Ascending aorta (tissue), 2 donors: ENCODE measurements at regions of chr7 and their contacts with region 1.

Region 1: DNA sequence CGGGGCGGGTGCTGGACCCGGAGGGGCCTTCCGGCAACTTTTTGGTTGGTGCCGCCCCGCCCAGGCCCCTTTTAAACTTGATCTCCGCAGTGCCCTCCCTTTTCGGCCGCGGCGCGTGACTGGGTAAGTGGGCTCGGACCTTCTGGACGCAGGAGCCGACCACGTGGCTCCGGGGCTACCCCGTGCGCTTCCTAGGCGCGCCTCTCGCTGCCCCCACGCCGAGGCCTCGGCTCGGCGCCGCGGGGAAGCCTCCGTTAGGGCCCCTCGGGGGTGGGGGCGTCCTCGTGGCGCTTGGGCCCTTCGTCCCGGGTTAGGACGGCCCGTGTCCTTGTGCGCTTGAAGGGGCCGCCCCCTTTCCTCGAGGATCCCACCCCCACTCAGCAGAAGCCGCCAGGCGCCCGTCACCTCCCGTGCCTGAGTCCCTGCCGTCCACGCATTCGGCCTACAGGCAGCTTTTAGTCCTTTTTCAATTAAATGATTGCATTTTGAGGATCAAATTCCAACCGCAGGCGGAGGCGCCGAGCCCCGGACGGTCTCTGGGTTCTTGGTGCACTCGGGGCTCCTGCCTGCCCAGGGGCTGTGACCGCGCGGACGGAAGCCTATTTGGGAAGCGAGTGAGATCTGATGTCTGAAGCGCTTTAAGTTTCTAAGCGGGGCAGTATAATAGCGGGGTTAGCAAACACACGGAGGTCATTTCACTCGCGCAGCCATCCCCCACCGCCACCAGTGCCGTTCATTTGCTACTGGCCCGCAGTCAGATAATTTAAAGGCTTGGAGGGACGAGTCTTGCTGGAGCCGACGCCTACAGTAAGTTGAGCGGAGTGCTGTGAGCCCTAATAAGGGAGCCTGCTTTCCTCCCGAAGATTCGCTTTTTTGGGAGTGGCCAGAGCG is 31.8 kb upstream of the TOMM7 start:
- DNase-seq: peak; percentile 80 to 95
- H3K4me3 ChIP-seq: peak overlapping the region; percentile 75 to 83
- H3K27ac ChIP-seq: peak overlapping the region; percentile 94 to 98
- H3K4me1 ChIP-seq: peaks cover 9 to 37% of the 10 kb centered on the region in 2 donors
- H3K27me3 ChIP-seq: no peaks in the 10 kb centered on the region
- CTCF ChIP-seq: peak in 1 of 3 experiments; percentile 61

Region 2: GRCh38 chr7:22559829-22560489 is 294.4 kb before region 1 on chr7:
- intact Hi-C with region 1: loop called (anchors 2 kb)
- DNase-seq: peak in 1 of 2 donors; percentile 85
- H3K4me3 ChIP-seq: no peak overlapping the region
- H3K27ac ChIP-seq: no peak overlapping the region
- H3K4me1 ChIP-seq: peaks cover 0 to 42% of the 10 kb centered on the region in 2 donors
- H3K27me3 ChIP-seq: no peaks in the 10 kb centered on the region
- CTCF ChIP-seq: peak; percentile 77 to 90 (median 89)

Region 3: GRCh38 chr7:22726345-22727185 is 127.8 kb before region 1 on chr7:
- intact Hi-C with region 1: loop called (anchors 2 kb)
- DNase-seq: peak in 1 of 2 donors; percentile 83
- H3K4me3 ChIP-seq: peak overlapping the region; percentile 57 to 61
- H3K27ac ChIP-seq: peak overlapping the region; percentile 60 to 83
- H3K4me1 ChIP-seq: peaks cover 5 to 36% of the 10 kb centered on the region in 2 donors
- H3K27me3 ChIP-seq: no peaks in the 10 kb centered on the region
- CTCF ChIP-seq: peak; percentile 21 to 55 (median 46)

Region 4: GRCh38 chr7:22751341-22751740 is 103.1 kb before region 1 on chr7:
- intact Hi-C with region 1: no loop called
- DNase-seq: no peak
- H3K4me3 ChIP-seq: no peak overlapping the region
- H3K27ac ChIP-seq: no peak overlapping the region
- H3K4me1 ChIP-seq: no peaks in the 10 kb centered on the region
- H3K27me3 ChIP-seq: no peaks in the 10 kb centered on the region
- CTCF ChIP-seq: no peak

Region 5: GRCh38 chr7:22872096-22872807 is 17.8 kb after region 1 on chr7:
- intact Hi-C with region 1: no loop called
- DNase-seq: no peak
- H3K4me3 ChIP-seq: no peak overlapping the region
- H3K27ac ChIP-seq: no peak overlapping the region
- H3K4me1 ChIP-seq: peaks cover 0 to 2% of the 10 kb centered on the region in 2 donors
- H3K27me3 ChIP-seq: no peaks in the 10 kb centered on the region
- CTCF ChIP-seq: no peak

Region 6: DNA sequence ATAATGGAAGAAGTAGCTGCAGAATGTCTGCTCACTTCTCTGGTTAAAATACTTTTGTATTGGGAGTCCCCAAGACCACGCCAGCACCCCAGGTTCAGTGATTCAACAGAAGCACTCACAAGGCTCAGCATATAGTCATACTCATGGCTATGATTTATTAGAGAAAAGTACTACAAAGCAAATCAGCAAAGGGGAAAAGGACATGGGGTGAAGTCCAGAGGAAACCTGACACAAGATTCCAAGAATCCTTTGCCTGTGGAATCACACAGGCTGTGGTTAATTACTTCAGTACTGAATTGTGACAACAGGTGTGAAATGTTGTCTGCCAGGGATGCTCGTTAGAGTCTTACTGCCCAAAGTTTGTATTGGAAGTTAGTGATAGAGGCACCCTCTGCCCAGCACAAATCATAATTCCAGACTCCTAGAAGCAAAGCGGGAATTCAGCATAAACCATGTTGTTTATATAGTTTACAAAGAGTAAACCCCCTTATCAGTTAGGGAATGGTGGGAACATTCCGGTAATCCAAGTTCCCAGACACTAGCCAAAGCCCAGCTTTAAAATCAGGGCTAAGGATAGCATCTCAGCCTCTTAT is 80.2 kb after region 1 on chr7:
- intact Hi-C with region 1: loop called (anchors 5 kb)
- DNase-seq: no peak
- H3K4me3 ChIP-seq: no peak overlapping the region
- H3K27ac ChIP-seq: peak overlapping the region; percentile 63 to 74
- H3K4me1 ChIP-seq: peaks cover 0 to 15% of the 10 kb centered on the region in 2 donors
- H3K27me3 ChIP-seq: no peaks in the 10 kb centered on the region
- CTCF ChIP-seq: no peak

Region 7: DNA sequence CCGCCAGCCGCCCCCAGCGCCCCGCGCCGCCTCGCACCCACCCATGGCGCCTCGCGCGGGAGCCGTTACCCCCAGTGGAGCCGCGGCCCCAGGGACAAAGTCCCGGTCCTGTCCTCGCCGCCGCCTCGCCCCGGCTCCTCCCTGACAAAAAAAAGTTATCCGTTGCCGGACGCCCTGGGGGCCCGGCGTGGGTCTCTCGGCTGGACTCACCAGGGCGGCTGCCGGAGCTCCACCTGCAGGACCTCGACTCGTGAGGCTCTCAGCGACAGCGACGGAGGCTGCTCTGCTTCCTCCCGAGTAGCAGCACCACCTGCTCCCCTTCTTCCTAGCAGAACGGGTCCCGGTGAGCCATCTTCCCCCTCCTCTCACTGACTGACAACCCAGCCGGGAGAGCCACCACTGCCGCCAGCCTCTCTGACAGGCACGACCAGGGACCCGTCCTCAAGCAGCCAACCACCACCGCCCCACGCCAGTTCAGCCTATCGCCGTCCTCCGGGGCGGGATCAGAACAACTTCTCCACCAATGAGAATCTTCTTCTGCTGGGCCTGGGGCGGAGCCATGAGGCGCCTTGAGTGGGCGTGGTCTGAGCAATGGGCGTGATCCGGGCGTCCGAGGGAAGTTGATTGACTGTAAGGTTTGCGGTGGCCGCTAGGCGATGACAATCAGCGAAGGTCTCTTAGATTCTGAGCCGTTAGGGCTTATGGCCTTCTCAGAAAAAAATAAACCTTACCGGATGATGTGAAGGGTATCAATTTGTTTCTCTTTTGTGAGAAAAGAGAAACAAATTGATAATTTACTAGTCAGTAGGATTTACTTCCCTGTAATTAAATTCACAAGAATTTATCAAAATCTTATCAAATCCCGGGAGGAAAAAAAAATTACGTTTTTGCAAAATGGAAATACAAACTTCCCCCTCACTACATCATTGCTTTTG is 159.6 kb after region 1 on chr7 and contains the start of gene HYCC1:
- intact Hi-C with region 1: loop called (anchors 1 kb)
- DNase-seq: peak; percentile 97 to 100
- H3K4me3 ChIP-seq: peak within 1 kb of the TSS; percentile 76 to 98
- H3K27ac ChIP-seq: peak within 1 kb of the TSS; percentile 78 to 88
- H3K4me1 ChIP-seq: peaks cover 4 to 30% of the 10 kb centered on the region in 2 donors
- H3K27me3 ChIP-seq: no peaks in the 10 kb centered on the region
- CTCF ChIP-seq: peak; percentile 64 to 69 (median 69)
- total RNA-seq, gene HYCC1: 10.9 TPM

Region 8: DNA sequence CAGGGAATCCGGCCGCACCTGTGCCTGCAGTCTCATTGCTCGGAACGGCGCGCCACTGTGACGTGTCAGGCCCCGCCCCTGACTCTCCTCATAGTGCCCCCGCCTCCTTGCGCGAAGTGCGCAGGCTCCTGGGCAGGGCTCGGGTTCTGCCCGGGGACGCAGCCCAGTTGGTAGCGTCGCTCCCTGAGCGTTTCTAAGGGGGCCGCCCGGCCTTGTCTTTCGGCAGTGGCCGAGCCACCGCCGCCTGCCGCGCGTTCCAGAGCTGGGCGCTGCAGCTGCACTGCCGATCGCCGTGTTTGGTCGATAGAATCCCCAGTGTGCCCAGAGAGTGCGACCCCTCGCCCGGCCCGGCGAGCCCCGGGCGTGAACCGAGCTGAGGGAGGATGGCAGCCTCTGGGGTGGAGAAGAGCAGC is 251.2 kb after region 1 on chr7 and contains the start of gene KLHL7:
- intact Hi-C with region 1: loop called (anchors 5 kb)
- DNase-seq: peak; percentile 87 to 99
- H3K4me3 ChIP-seq: peak within 1 kb of the TSS; percentile 88 to 96
- H3K27ac ChIP-seq: peak within 1 kb of the TSS; percentile 89 to 92
- H3K4me1 ChIP-seq: peaks cover 4 to 26% of the 10 kb centered on the region in 2 donors
- H3K27me3 ChIP-seq: no peaks in the 10 kb centered on the region
- CTCF ChIP-seq: no peak
- total RNA-seq, gene KLHL7: 1.2 TPM

Region 9: DNA sequence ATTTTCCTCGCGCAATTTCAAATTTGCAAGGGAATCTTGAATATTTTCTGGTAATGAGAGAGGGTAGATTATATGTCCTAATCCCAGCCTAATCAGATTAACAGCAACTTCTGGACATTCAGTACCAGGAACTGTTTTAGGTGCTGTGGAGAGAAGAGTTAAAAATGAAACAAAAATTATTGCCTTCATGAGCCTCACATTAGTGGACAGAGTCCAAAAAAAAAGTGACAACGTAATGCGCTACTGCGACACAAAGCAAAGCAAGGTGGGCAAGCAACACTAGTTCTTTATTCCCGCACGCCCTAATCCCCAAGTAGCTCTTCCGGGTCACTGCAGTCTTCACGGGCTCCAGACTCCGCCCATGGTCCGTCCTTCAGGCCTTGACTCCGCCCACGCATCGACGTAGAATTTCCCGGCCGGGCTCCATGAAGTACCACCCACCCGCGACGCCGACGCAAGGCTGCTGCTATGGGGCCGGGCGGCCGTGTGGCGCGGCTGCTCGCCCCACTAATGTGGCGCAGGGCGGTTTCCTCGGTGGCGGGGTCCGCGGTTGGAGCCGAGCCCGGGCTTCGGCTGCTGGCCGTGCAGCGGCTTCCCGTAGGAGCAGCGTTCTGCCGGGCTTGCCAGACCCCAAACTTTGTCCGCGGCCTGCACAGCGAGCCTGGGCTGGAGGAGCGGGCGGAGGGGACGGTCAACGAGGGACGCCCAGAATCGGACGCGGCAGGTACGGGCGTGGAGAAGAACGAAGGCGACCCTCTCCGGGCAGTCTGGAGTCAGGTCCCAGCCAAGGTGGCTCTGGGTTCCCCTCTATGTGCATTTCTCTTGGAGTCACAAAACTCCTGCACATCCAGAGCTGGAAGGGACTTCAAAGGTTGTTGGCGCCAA is 444.7 kb after region 1 on chr7 and contains the start of gene MALSU1:
- intact Hi-C with region 1: loop called (anchors 10 kb)
- DNase-seq: peak; percentile 79 to 99
- H3K4me3 ChIP-seq: peak within 1 kb of the TSS; percentile 78 to 91
- H3K27ac ChIP-seq: peak within 1 kb of the TSS; percentile 75 to 79
- H3K4me1 ChIP-seq: peaks cover 8 to 17% of the 10 kb centered on the region in 2 donors
- H3K27me3 ChIP-seq: no peaks in the 10 kb centered on the region
- CTCF ChIP-seq: no peak
- total RNA-seq, gene MALSU1: 22.4 TPM